WTC11 (cell line): ENCODE measurements at regions of chr19 and their contacts with region 1.

Region 1: GRCh38 chr19:3970808-3971598 is at the start of gene DAPK3:
- DNase-seq: peak; percentile 98
- ATAC-seq: peak; percentile 65
- H3K4me3 Mint-ChIP-seq: peak within 1 kb of the TSS; percentile 96
- H3K27ac Mint-ChIP-seq: peak within 1 kb of the TSS; percentile 100
- H3K4me1 Mint-ChIP-seq: peaks cover 26% of the 10 kb centered on the region
- H3K27me3 Mint-ChIP-seq: no peaks in the 10 kb centered on the region; the same call in 1 of the 2 replicates
- CTCF ChIP-seq: no peak
- total RNA-seq, gene DAPK3: 61.5 to 73.5 TPM (median 68.4 TPM) in 3 replicates

Region 2: GRCh38 chr19:3801412-3802096 is 169.4 kb before region 1 on chr19:
- CTCF ChIA-PET with region 1: no interaction called
- POLR2A ChIA-PET with region 1: no interaction called
- DNase-seq: peak; percentile 74
- ATAC-seq: peak; percentile 86
- H3K4me3 Mint-ChIP-seq: peak overlapping the region; percentile 60
- H3K27ac Mint-ChIP-seq: no peak overlapping the region
- H3K4me1 Mint-ChIP-seq: 0 out of 2 replicates have a peak, but pooled peaks cover 4% of the 10 kb centered on the region
- H3K27me3 Mint-ChIP-seq: peaks cover 32% of the 10 kb centered on the region
- CTCF ChIP-seq: no peak

Region 3: GRCh38 chr19:3880471-3881271 is 90.3 kb before region 1 on chr19 and contains the start of gene ATCAY:
- CTCF ChIA-PET with region 1: interaction called, 10 read pairs
- POLR2A ChIA-PET with region 1: interaction called, 4 read pairs
- DNase-seq: peak; percentile 69
- ATAC-seq: peak; percentile 71
- H3K4me3 Mint-ChIP-seq: peak within 1 kb of the TSS; percentile 85
- H3K27ac Mint-ChIP-seq: peak within 1 kb of the TSS; percentile 54; the same call in 1 of the 2 replicates
- H3K4me1 Mint-ChIP-seq: peaks cover 13% of the 10 kb centered on the region; the same call in 1 of the 2 replicates
- H3K27me3 Mint-ChIP-seq: peaks cover 10% of the 10 kb centered on the region
- CTCF ChIP-seq: no peak
- total RNA-seq, gene ATCAY: 21.1 to 23.5 TPM (median 21.3 TPM) in 3 replicates

Region 4: GRCh38 chr19:3932931-3933810 is 37.8 kb before region 1 on chr19 and contains the start of gene NMRK2:
- CTCF ChIA-PET with region 1: interaction called, 13 read pairs
- POLR2A ChIA-PET with region 1: interaction called, 21 read pairs
- DNase-seq: peak; percentile 78
- ATAC-seq: peak; percentile 80
- H3K4me3 Mint-ChIP-seq: peak within 1 kb of the TSS; percentile 80
- H3K27ac Mint-ChIP-seq: peak within 1 kb of the TSS; percentile 96
- H3K4me1 Mint-ChIP-seq: peaks cover 7% of the 10 kb centered on the region
- H3K27me3 Mint-ChIP-seq: no peaks in the 10 kb centered on the region
- CTCF ChIP-seq: no peak
- total RNA-seq, gene NMRK2: 50.4 to 61.9 TPM (median 51.1 TPM) in 3 replicates

Region 5: GRCh38 chr19:3950871-3951861 is 19.8 kb before region 1 on chr19:
- CTCF ChIA-PET with region 1: no interaction called
- POLR2A ChIA-PET with region 1: interaction called, 11 read pairs
- DNase-seq: no peak
- ATAC-seq: peak; percentile 40
- H3K4me3 Mint-ChIP-seq: no peak overlapping the region
- H3K27ac Mint-ChIP-seq: no peak overlapping the region
- H3K4me1 Mint-ChIP-seq: peaks cover 8% of the 10 kb centered on the region
- H3K27me3 Mint-ChIP-seq: no peaks in the 10 kb centered on the region
- CTCF ChIP-seq: no peak